IMR-90 (cell line): ENCODE measurements at regions of chr1 and their contacts with region 1.

Region 1: GRCh38 chr1:159854693-159855192 is 7.7 kb downstream of the VSIG8 start:
- DNase-seq: peak; percentile 77
- ATAC-seq: peak; percentile 95
- H3K4me3 ChIP-seq: peak overlapping the region; percentile 62
- H3K27ac ChIP-seq: peak overlapping the region; percentile 75
- H3K4me1 ChIP-seq: peaks cover 4% of the 10 kb centered on the region
- H3K27me3 ChIP-seq: no peaks in the 10 kb centered on the region
- CTCF ChIP-seq: no peak
- POLR2A ChIP-seq: peak; percentile 71
- RAD21 ChIP-seq: peak; percentile 10; the same call in 1 of the 2 replicates

Region 2: GRCh38 chr1:159924981-159925712 is 70.4 kb after region 1 on chr1 and contains the start of gene TAGLN2:
- CTCF ChIA-PET with region 1: no interaction called
- POLR2A ChIA-PET with region 1: no interaction called
- dilution Hi-C with region 1: no loop called
- in situ Hi-C with region 1: no loop called
- intact Hi-C with region 1: loop called (anchors 2 kb)
- DNase-seq: peak; percentile 90
- ATAC-seq: peak; percentile 82
- H3K4me3 ChIP-seq: peak within 1 kb of the TSS; percentile 83
- H3K27ac ChIP-seq: peak within 1 kb of the TSS; percentile 90
- H3K4me1 ChIP-seq: peaks cover 15% of the 10 kb centered on the region
- H3K27me3 ChIP-seq: no peaks in the 10 kb centered on the region
- CTCF ChIP-seq: no peak
- POLR2A ChIP-seq: peak; percentile 97
- RAD21 ChIP-seq: no peak
- total RNA-seq, gene TAGLN2: 365 and 440 TPM in 2 replicates